Transverse colon (tissue), 4 donors: ENCODE measurements at regions of chr21 and their contacts with region 1.

Region 1: DNA sequence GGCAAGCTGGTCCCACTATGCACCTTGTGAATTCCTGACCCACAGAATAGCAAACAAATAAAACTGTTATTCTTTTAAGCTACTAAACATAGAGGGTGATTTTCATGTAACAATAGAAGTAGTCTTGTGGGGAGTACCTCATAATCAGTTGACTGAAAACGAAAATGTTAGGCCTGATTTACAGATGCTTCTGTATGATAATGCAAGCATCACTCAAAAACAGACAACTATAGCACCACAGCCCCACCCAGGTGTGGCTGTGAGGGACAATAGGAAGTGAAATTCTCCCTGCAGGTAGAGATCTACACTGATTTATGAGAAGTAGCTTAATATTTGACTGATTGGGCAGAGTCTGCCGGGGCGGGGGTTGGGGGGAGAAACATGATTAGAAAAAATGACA is 26.5 kb upstream of the KRTAP19-8 start:
- DNase-seq: no peak
- H3K4me3 ChIP-seq: no peak overlapping the region
- H3K27ac ChIP-seq: no peak overlapping the region
- H3K4me1 ChIP-seq: no peaks in the 10 kb centered on the region
- H3K27me3 ChIP-seq: no peaks in the 10 kb centered on the region
- CTCF ChIP-seq: no peak
- EP300 ChIP-seq: no peak
- POLR2A ChIP-seq: no peak

Region 2: GRCh38 chr21:30962013-30962412 is 102.8 kb before region 1 on chr21:
- in situ Hi-C with region 1: loop called in 1 of 4 experiments (anchors 25 kb)
- intact Hi-C with region 1: no loop called
- DNase-seq: no peak
- H3K4me3 ChIP-seq: no peak overlapping the region
- H3K27ac ChIP-seq: no peak overlapping the region
- H3K4me1 ChIP-seq: no peaks in the 10 kb centered on the region
- H3K27me3 ChIP-seq: no peaks in the 10 kb centered on the region
- CTCF ChIP-seq: no peak
- EP300 ChIP-seq: no peak
- POLR2A ChIP-seq: no peak

Region 3: DNA sequence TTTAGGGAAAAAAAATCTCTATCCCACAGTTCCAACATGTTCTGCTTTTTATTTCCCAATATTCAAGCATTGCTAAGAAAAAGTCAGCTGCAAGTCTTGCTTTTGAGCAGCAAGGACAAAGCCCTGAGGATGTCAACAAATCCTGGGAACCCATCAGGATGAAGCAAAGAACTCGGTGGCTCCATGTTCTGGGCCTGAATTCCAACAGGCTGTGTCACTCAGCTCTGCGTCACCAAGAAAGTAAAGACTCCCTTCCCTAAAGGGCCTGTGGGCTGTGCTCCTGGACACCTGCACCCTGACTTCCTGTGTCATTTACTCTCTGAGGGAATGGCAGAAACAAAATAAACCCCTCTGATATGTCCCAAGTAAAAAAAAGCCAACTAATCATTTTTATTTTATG is 183.8 kb after region 1 on chr21:
- in situ Hi-C with region 1: no loop called
- intact Hi-C with region 1: no loop called
- DNase-seq: no peak
- H3K4me3 ChIP-seq: no peak overlapping the region
- H3K27ac ChIP-seq: no peak overlapping the region
- H3K4me1 ChIP-seq: no peaks in the 10 kb centered on the region
- H3K27me3 ChIP-seq: no peaks in the 10 kb centered on the region
- CTCF ChIP-seq: no peak
- EP300 ChIP-seq: no peak
- POLR2A ChIP-seq: no peak